ENCODE measurements at regions of chr6 and their contacts with region 1.

Region 1: GRCh38 chr6:43951063-43951755 is 176.0 kb downstream of the MRPL14 start:
- DNase-seq: peak; percentile 56 to 85
- H3K4me3 ChIP-seq: no peak overlapping the region
- H3K27ac ChIP-seq: no peak overlapping the region
- H3K4me1 ChIP-seq: peaks cover 0 to 5% (median 1%) of the 10 kb centered on the region in 4 experiments; a peak in 3 of 7 replicates
- H3K27me3 ChIP-seq: no peaks in the 10 kb centered on the region
- CTCF ChIP-seq: peak; percentile 96 to 98 (median 98)
- EP300 ChIP-seq: no peak
- POLR2A ChIP-seq: no peak
- RAD21 ChIP-seq: peak; percentile 98

Region 2: DNA sequence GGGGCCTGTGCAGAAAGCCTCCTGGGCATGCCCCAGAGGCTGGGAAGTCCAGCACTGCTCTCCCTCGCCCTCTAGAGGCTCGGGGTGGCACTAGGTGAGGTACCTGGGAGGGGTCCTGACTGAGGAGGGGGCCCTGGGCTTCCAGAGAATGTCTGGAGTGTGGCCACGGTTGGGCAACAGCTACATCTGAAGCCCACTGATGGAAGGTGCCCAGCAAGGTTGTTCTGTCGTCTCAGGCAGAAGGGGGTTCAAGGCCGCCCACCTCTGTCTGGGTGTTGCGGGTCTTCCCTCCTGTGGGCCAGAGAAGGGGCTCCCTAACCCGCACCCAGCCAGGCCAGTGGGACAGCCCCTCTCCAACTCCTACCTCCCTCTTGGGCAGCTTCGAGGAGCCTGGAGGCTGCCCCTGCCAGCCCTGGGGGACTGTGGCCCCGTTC is 192.6 kb before region 1 on chr6:
- CTCF ChIA-PET with region 1: interaction called, 20 read pairs
- POLR2A ChIA-PET with region 1: no interaction called
- DNase-seq: peak in 1 of 2 experiments; percentile 91
- H3K4me3 ChIP-seq: no peak overlapping the region
- H3K27ac ChIP-seq: no peak overlapping the region
- H3K4me1 ChIP-seq: peaks cover 0 to 9% (median 5%) of the 10 kb centered on the region in 4 experiments; a peak in 5 of 7 replicates
- H3K27me3 ChIP-seq: no peaks in the 10 kb centered on the region
- CTCF ChIP-seq: peak; percentile 87 to 95 (median 94)
- EP300 ChIP-seq: no peak
- POLR2A ChIP-seq: no peak
- RAD21 ChIP-seq: peak; percentile 81 to 88

Region 3: DNA sequence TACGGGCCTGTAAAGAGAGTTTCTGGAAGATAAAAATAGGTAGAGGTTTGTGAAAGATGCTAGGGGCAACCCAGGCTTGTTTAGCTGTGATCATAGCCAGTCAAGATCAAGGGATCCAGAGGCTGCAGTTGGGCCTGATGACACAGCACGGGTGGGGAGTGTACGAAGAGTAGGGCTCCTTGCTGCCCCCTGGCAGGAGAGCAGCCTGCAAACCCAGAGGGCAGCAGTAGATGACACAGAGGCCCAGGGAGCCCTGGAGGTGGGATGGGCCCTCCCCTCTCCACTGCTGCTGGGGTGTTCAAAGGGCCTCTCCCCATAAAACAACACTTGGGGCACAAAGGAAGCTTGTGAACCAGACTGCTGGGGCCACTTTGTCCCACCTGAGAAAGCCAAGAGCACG is 134.0 kb before region 1 on chr6:
- CTCF ChIA-PET with region 1: interaction called, 28 read pairs
- POLR2A ChIA-PET with region 1: no interaction called
- DNase-seq: peak; percentile 27 to 61
- H3K4me3 ChIP-seq: no peak overlapping the region
- H3K27ac ChIP-seq: no peak overlapping the region
- H3K4me1 ChIP-seq: no peaks in the 10 kb centered on the region
- H3K27me3 ChIP-seq: no peaks in the 10 kb centered on the region
- CTCF ChIP-seq: peak; percentile 70 to 76 (median 73)
- EP300 ChIP-seq: no peak
- POLR2A ChIP-seq: no peak
- RAD21 ChIP-seq: peak; percentile 49 to 61

Region 4: DNA sequence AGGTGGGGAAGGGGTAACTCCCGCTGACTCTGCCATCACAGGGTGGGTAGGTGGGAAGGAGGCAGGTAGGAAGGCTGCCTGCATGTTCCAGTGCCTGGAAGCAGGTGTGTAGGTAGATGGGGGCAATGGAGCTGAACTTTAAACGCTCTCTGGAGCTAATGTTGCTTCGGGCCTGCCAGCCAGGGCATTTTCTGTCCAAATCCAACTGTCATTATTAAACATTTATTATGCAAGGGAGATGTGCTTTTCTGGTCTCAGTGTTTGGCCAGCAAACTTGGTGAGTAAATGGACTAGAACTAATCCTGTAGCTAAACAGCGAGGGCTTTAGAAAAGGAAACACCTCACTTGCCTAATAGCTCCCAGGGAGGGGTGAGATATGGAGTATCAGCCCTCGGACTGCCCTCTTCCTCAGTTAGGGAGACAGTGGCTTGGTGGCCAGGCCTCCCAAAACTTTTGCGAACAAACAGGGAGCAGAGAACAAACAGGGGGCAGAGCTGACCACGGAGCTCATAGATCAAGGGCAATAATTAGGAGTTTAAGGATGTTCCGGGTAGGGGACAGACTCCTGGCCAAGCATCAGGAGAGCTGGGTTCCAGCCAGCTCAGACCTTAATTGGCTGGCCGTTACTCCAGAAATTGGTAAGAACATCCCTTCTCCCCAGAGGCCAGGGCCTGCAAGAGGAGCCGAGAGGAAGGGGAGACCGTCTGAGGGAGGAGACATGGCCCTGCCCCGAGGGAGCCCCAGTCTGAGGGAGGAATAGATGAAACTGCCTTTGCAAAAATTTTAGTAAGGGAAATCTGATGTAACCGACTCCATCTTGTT is 50.1 kb before region 1 on chr6:
- CTCF ChIA-PET with region 1: interaction called, 28 read pairs
- POLR2A ChIA-PET with region 1: no interaction called
- DNase-seq: no peak
- H3K4me3 ChIP-seq: no peak overlapping the region
- H3K27ac ChIP-seq: no peak overlapping the region
- H3K4me1 ChIP-seq: no peaks in the 10 kb centered on the region
- H3K27me3 ChIP-seq: no peaks in the 10 kb centered on the region
- CTCF ChIP-seq: no peak
- EP300 ChIP-seq: no peak
- POLR2A ChIP-seq: no peak
- RAD21 ChIP-seq: no peak

Region 5: GRCh38 chr6:43977404-43978111 is 26.3 kb after region 1 on chr6:
- CTCF ChIA-PET with region 1: interaction called, 103 read pairs
- POLR2A ChIA-PET with region 1: interaction called, 4 read pairs
- DNase-seq: peak in 1 of 2 experiments; percentile 19
- H3K4me3 ChIP-seq: no peak overlapping the region
- H3K27ac ChIP-seq: no peak overlapping the region
- H3K4me1 ChIP-seq: no peaks in the 10 kb centered on the region
- H3K27me3 ChIP-seq: no peaks in the 10 kb centered on the region
- CTCF ChIP-seq: no peak
- EP300 ChIP-seq: no peak
- POLR2A ChIP-seq: no peak
- RAD21 ChIP-seq: no peak

Region 6: GRCh38 chr6:44002593-44003344 is 51.6 kb after region 1 on chr6:
- CTCF ChIA-PET with region 1: interaction called, 82 read pairs
- POLR2A ChIA-PET with region 1: no interaction called
- DNase-seq: peak; percentile 44 to 86
- H3K4me3 ChIP-seq: peak overlapping the region; percentile 22 to 60 (median 37); a peak in 7 of 8 replicates
- H3K27ac ChIP-seq: peak overlapping the region; percentile 20; the same call in 1 of the 2 replicates
- H3K4me1 ChIP-seq: peaks cover 4 to 48% (median 38%) of the 10 kb centered on the region in 4 experiments
- H3K27me3 ChIP-seq: peaks cover 0 to 18% (median 9%) of the 10 kb centered on the region in 4 experiments; a peak in 5 of 7 replicates
- CTCF ChIP-seq: peak in 1 of 3 experiments; percentile 5; a peak in 2 of 4 replicates
- EP300 ChIP-seq: peak in 1 of 2 experiments; percentile 2; a peak in 1 of 3 replicates
- POLR2A ChIP-seq: no peak
- RAD21 ChIP-seq: peak in 1 of 2 experiments; percentile 17; a peak in 1 of 4 replicates